Naive thymus-derived CD4-positive, alpha-beta T cell (primary cell): ENCODE measurements at regions of chr11 and their contacts with region 1.

Region 1: GRCh38 chr11:65711785-65712632 is at the start of gene KAT5:
- DNase-seq: peak; percentile 95 to 99 (median 98)
- ATAC-seq: peak; percentile 87
- H3K4me3 ChIP-seq: peak within 1 kb of the TSS; percentile 100
- H3K4me3 Mint-ChIP-seq: peak within 1 kb of the TSS; percentile 91 to 99 (median 95)
- H3K27ac ChIP-seq: peak within 1 kb of the TSS; percentile 95
- H3K27ac Mint-ChIP-seq: peak within 1 kb of the TSS; percentile 93 to 100 (median 99)
- H3K4me1 ChIP-seq: peaks cover 5 to 9% of the 10 kb centered on the region in 2 donors
- H3K4me1 Mint-ChIP-seq: peaks cover 12 to 41% (median 25%) of the 10 kb centered on the region in 7 donors
- H3K27me3 ChIP-seq: no peaks in the 10 kb centered on the region
- H3K27me3 Mint-ChIP-seq: peaks cover 0 to 5% (median 0%) of the 10 kb centered on the region in 5 donors
- total RNA-seq, gene KAT5: 68.6 to 133 (median 113) TPM

Region 2: GRCh38 chr11:65477149-65477965 is 234.7 kb before region 1 on chr11:
- CTCF ChIA-PET with region 1: no interaction called
- POLR2A ChIA-PET with region 1: no interaction called
- intact Hi-C with region 1: no loop called
- DNase-seq: peak; percentile 69 to 96 (median 75)
- ATAC-seq: peak; percentile 94
- H3K4me3 ChIP-seq: peak overlapping the region; percentile 97
- H3K4me3 Mint-ChIP-seq: peak overlapping the region; percentile 87 to 100 (median 96)
- H3K27ac ChIP-seq: peak overlapping the region; percentile 96
- H3K27ac Mint-ChIP-seq: peak overlapping the region; percentile 94 to 100 (median 99)
- H3K4me1 ChIP-seq: peaks cover 6 to 17% of the 10 kb centered on the region in 2 donors
- H3K4me1 Mint-ChIP-seq: peaks cover 8 to 30% (median 14%) of the 10 kb centered on the region in 7 donors
- H3K27me3 ChIP-seq: no peaks in the 10 kb centered on the region
- H3K27me3 Mint-ChIP-seq: peaks cover 0 to 2% (median 0%) of the 10 kb centered on the region in 5 donors

Region 3: GRCh38 chr11:65652511-65653231 is 59.3 kb before region 1 on chr11:
- CTCF ChIA-PET with region 1: interaction called, 5 read pairs
- POLR2A ChIA-PET with region 1: interaction called, 18 read pairs
- intact Hi-C with region 1: loop called (anchors 1 to 2 kb)
- DNase-seq: peak; percentile 91 to 99 (median 95)
- ATAC-seq: peak; percentile 92
- H3K4me3 ChIP-seq: peak overlapping the region; percentile 58
- H3K4me3 Mint-ChIP-seq: peak overlapping the region; percentile 70 to 95 (median 90)
- H3K27ac ChIP-seq: peak overlapping the region; percentile 98
- H3K27ac Mint-ChIP-seq: peak overlapping the region; percentile 90 to 99 (median 98)
- H3K4me1 ChIP-seq: peaks cover 25% of the 10 kb centered on the region in 2 donors
- H3K4me1 Mint-ChIP-seq: peaks cover 36 to 59% (median 51%) of the 10 kb centered on the region in 7 donors
- H3K27me3 ChIP-seq: no peaks in the 10 kb centered on the region
- H3K27me3 Mint-ChIP-seq: no peaks in the 10 kb centered on the region

Region 4: GRCh38 chr11:65773784-65774411 is 61.9 kb after region 1 on chr11:
- CTCF ChIA-PET with region 1: interaction called, 7 read pairs
- POLR2A ChIA-PET with region 1: interaction called, 9 read pairs
- intact Hi-C with region 1: loop called (anchors 1 kb)
- DNase-seq: no peak
- ATAC-seq: no peak
- H3K4me3 ChIP-seq: no peak overlapping the region
- H3K4me3 Mint-ChIP-seq: no peak overlapping the region
- H3K27ac ChIP-seq: no peak overlapping the region
- H3K27ac Mint-ChIP-seq: no peak overlapping the region
- H3K4me1 ChIP-seq: peaks cover 0 to under 1% of the 10 kb centered on the region in 2 donors
- H3K4me1 Mint-ChIP-seq: peaks cover 11 to 20% (median 14%) of the 10 kb centered on the region in 7 donors
- H3K27me3 ChIP-seq: no peaks in the 10 kb centered on the region
- H3K27me3 Mint-ChIP-seq: no peaks in the 10 kb centered on the region

Region 5: GRCh38 chr11:65817835-65818742 is 106.1 kb after region 1 on chr11:
- CTCF ChIA-PET with region 1: interaction called, 29 read pairs
- POLR2A ChIA-PET with region 1: interaction called, 20 read pairs
- intact Hi-C with region 1: loop called (anchors 1 kb)
- DNase-seq: peak; percentile 79 to 98 (median 89)
- ATAC-seq: peak; percentile 98
- H3K4me3 ChIP-seq: peak overlapping the region; percentile 72
- H3K4me3 Mint-ChIP-seq: peak overlapping the region; percentile 74 to 90 (median 82)
- H3K27ac ChIP-seq: peak overlapping the region; percentile 75
- H3K27ac Mint-ChIP-seq: peak overlapping the region; percentile 56 to 90 (median 76)
- H3K4me1 ChIP-seq: peaks cover 7% of the 10 kb centered on the region in 2 donors
- H3K4me1 Mint-ChIP-seq: peaks cover 6 to 21% (median 17%) of the 10 kb centered on the region in 7 donors
- H3K27me3 ChIP-seq: no peaks in the 10 kb centered on the region
- H3K27me3 Mint-ChIP-seq: peaks cover 0 to 4% (median 0%) of the 10 kb centered on the region in 5 donors

Region 6: GRCh38 chr11:65961232-65961901 is 249.4 kb after region 1 on chr11 and contains the start of gene SART1:
- CTCF ChIA-PET with region 1: no interaction called
- POLR2A ChIA-PET with region 1: no interaction called
- intact Hi-C with region 1: loop called in 1 of 2 experiments (anchors 1 kb)
- DNase-seq: peak; percentile 81 to 97 (median 94)
- ATAC-seq: peak; percentile 96
- H3K4me3 ChIP-seq: peak within 1 kb of the TSS; percentile 83
- H3K4me3 Mint-ChIP-seq: peak within 1 kb of the TSS; percentile 93 to 99 (median 98)
- H3K27ac ChIP-seq: peak within 1 kb of the TSS; percentile 96
- H3K27ac Mint-ChIP-seq: peak within 1 kb of the TSS; percentile 96 to 99 (median 98)
- H3K4me1 ChIP-seq: peaks cover 27 to 38% of the 10 kb centered on the region in 2 donors
- H3K4me1 Mint-ChIP-seq: peaks cover 23 to 64% (median 54%) of the 10 kb centered on the region in 7 donors
- H3K27me3 ChIP-seq: no peaks in the 10 kb centered on the region
- H3K27me3 Mint-ChIP-seq: no peaks in the 10 kb centered on the region
- total RNA-seq, gene SART1: 65.9 to 102 (median 90.8) TPM

Region 7: DNA sequence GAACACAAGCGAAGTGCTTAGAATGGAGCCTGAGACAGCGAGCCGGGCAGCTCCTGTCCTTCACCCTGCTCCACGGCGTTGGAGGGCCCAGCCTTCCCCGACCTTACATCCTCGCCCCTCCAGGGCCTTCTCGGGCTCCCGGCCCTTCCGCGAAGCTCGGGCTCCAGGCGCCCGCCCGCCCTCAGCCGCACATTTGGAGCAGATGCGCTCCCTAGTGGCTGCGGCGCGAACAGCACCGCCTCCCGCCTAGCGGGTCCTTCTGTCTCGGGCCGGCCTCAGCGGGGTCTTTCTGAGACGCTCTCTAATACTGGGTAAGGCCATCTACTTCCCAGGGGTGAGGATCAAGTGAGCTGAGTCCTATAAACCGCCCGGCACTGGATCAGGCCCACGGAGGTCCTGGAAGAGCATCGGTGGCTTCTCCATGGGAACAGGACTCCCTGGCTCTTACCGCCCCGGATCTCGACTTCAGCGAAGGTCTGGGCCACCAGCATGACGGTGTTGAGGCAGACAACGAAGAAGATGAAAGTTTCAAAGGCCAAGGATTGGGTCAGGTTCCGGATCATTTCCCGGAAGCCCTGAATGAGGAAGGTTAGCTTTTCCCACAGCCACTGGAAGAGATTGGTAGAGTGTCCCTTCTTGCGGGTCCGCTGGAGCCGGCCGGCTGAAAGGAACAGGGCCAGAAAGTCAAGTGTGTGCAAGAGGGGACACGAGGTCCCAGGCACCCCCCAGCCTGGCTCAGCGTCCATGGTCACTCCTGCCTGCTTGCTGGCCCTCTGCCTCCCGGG is 310.6 kb after region 1 on chr11:
- CTCF ChIA-PET with region 1: interaction called, 5 read pairs
- POLR2A ChIA-PET with region 1: interaction called, 4 read pairs
- intact Hi-C with region 1: loop called in 1 of 2 experiments (anchors 1 kb)
- DNase-seq: peak; percentile 52 to 89 (median 69)
- ATAC-seq: peak; percentile 92
- H3K4me3 ChIP-seq: peak overlapping the region; percentile 39
- H3K4me3 Mint-ChIP-seq: peak overlapping the region in 9 of 10 donors; percentile 4 to 73 (median 45)
- H3K27ac ChIP-seq: no peak overlapping the region
- H3K27ac Mint-ChIP-seq: peak overlapping the region in 1 of 9 donors; percentile 59
- H3K4me1 ChIP-seq: peaks cover 0 to 5% of the 10 kb centered on the region in 2 donors
- H3K4me1 Mint-ChIP-seq: peaks cover 4 to 17% (median 5%) of the 10 kb centered on the region in 7 donors
- H3K27me3 ChIP-seq: no peaks in the 10 kb centered on the region
- H3K27me3 Mint-ChIP-seq: peaks cover 0 to 9% (median 4%) of the 10 kb centered on the region in 5 donors

Region 8: GRCh38 chr11:66051766-66052663 is 340.0 kb after region 1 on chr11 and contains the start of gene SF3B2:
- CTCF ChIA-PET with region 1: no interaction called
- POLR2A ChIA-PET with region 1: interaction called, 5 read pairs
- intact Hi-C with region 1: loop called in 1 of 2 experiments (anchors 1 kb)
- DNase-seq: peak; percentile 81 to 94 (median 93)
- ATAC-seq: peak; percentile 99
- H3K4me3 ChIP-seq: peak within 1 kb of the TSS; percentile 88
- H3K4me3 Mint-ChIP-seq: peak within 1 kb of the TSS; percentile 95 to 100 (median 98)
- H3K27ac ChIP-seq: peak within 1 kb of the TSS; percentile 93
- H3K27ac Mint-ChIP-seq: peak within 1 kb of the TSS; percentile 95 to 99 (median 98)
- H3K4me1 ChIP-seq: peaks cover 14 to 18% of the 10 kb centered on the region in 2 donors
- H3K4me1 Mint-ChIP-seq: peaks cover 17 to 44% (median 38%) of the 10 kb centered on the region in 7 donors
- H3K27me3 ChIP-seq: no peaks in the 10 kb centered on the region
- H3K27me3 Mint-ChIP-seq: peaks cover 0 to 9% (median 0%) of the 10 kb centered on the region in 5 donors
- total RNA-seq, gene SF3B2: 163 to 248 (median 206) TPM